ENCODE measurements at regions of chr12 and their contacts with region 1.

Region 1: DNA sequence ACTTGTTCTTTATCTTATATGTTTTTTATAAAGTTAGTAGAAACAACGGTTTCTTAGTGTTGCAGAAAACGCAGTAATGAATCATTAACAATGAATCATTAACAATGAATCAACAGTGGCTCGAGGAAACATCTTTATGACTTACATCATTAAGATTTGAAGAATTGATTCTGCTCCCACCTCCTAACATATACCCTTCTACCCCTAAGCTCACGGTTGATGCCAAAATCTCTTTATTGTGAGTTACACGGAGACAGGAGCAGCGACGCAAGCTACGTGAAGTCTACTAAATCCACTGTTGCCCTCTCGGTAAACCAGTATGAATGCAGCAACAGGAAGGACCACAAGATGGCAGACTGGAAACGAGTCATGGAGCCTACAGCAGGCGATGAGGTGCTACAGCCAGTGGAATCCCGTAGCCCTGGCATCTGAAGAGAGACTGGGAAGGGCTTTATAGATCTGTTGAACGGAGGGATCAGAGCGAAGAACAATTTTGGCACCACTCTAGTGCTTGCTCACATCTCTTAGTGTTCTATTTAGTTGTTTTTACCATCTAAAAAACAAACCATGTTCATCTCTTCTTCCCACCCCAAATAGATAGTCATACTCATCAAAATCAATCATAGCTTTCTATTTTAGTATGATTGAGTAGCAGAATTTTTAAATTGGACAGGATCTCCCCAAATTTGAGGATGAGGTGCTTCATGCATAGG is 332.7 kb downstream of the DUSP6 start:
- DNase-seq: peak; percentile 78
- ATAC-seq: peak; percentile 100
- H3K4me3 ChIP-seq: peak overlapping the region in 2 of 3 experiments; percentile 37 to 41; a peak in 4 of 6 replicates
- H3K27ac ChIP-seq: no peak overlapping the region
- H3K4me1 ChIP-seq: no peaks in the 10 kb centered on the region
- H3K27me3 ChIP-seq: peaks cover 0 to 3% of the 10 kb centered on the region in 2 experiments; a peak in 2 of 5 replicates
- CTCF ChIP-seq: peak; percentile 94
- EP300 ChIP-seq: no peak
- POLR2A ChIP-seq: no peak
- RAD21 ChIP-seq: peak; percentile 77

Region 2: DNA sequence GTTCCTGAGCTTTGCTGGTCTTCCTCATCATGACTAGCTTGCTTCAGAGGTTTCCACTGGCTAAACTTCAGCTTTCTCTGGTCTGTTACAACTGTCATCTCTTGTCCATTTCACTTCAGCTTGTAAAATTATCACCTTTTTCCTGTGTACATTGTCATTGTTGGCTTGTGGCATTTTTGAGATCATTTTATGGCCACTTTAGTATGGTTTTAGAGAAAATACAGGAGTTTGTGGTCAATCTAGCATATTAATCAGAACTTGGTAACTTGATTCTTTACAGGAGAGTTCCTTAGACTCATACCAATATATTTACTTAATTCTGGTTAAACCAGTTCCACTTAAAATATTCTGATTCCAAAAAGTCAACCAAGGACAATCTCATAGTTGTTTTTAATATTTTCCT is 203.4 kb before region 1 on chr12:
- CTCF ChIA-PET with region 1: no interaction called
- POLR2A ChIA-PET with region 1: no interaction called
- in situ Hi-C with region 1: no loop called
- intact Hi-C with region 1: no loop called
- DNase-seq: no peak
- ATAC-seq: no peak
- H3K4me3 ChIP-seq: no peak overlapping the region
- H3K27ac ChIP-seq: no peak overlapping the region
- H3K4me1 ChIP-seq: no peaks in the 10 kb centered on the region
- H3K27me3 ChIP-seq: no peaks in the 10 kb centered on the region
- CTCF ChIP-seq: no peak
- EP300 ChIP-seq: no peak
- POLR2A ChIP-seq: no peak
- RAD21 ChIP-seq: no peak

Region 3: GRCh38 chr12:88889326-88890110 is 130.0 kb before region 1 on chr12:
- CTCF ChIA-PET with region 1: no interaction called
- POLR2A ChIA-PET with region 1: no interaction called
- in situ Hi-C with region 1: no loop called
- intact Hi-C with region 1: no loop called
- DNase-seq: no peak
- ATAC-seq: no peak
- H3K4me3 ChIP-seq: no peak overlapping the region
- H3K27ac ChIP-seq: no peak overlapping the region
- H3K4me1 ChIP-seq: no peaks in the 10 kb centered on the region
- H3K27me3 ChIP-seq: no peaks in the 10 kb centered on the region
- CTCF ChIP-seq: no peak
- EP300 ChIP-seq: no peak
- POLR2A ChIP-seq: no peak
- RAD21 ChIP-seq: no peak

Region 4: GRCh38 chr12:88922816-88923215 is 96.7 kb before region 1 on chr12:
- CTCF ChIA-PET with region 1: no interaction called
- POLR2A ChIA-PET with region 1: no interaction called
- in situ Hi-C with region 1: no loop called
- intact Hi-C with region 1: no loop called
- DNase-seq: no peak
- ATAC-seq: no peak
- H3K4me3 ChIP-seq: no peak overlapping the region
- H3K27ac ChIP-seq: no peak overlapping the region
- H3K4me1 ChIP-seq: peaks cover 20% of the 10 kb centered on the region
- H3K27me3 ChIP-seq: no peaks in the 10 kb centered on the region
- CTCF ChIP-seq: no peak
- EP300 ChIP-seq: no peak
- POLR2A ChIP-seq: no peak
- RAD21 ChIP-seq: no peak

Region 5: DNA sequence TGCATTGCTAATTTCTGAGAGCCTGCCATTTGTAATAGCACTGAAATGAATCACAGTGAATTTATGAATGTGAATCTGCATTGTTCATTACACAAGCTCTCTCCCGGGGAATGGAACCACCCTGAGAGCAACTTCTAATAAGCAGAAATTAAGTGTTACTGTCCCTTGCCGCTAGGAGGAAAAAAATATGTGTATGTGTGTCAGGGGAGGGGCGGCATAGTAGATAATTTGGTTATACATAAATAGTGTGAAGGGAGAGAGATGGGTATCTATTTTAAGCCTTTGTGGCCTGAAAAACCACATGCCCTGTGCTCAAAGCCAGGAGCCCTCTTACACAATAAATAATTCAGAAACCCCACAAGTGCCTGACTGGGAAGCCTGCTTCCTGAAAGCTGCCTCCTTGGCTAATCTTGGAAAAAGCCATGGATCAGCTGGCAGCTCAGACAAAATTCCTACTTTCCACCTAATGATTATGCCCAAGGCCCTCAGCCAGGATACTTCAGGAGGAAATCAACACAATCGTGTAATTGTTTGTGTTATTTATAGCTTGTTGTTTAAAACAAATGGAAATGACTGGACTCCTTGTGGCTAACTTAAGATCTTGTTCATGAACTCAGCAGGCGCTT is 73.1 kb before region 1 on chr12:
- CTCF ChIA-PET with region 1: no interaction called
- POLR2A ChIA-PET with region 1: no interaction called
- in situ Hi-C with region 1: no loop called
- intact Hi-C with region 1: no loop called
- DNase-seq: no peak
- ATAC-seq: no peak
- H3K4me3 ChIP-seq: no peak overlapping the region
- H3K27ac ChIP-seq: no peak overlapping the region
- H3K4me1 ChIP-seq: no peaks in the 10 kb centered on the region
- H3K27me3 ChIP-seq: no peaks in the 10 kb centered on the region
- CTCF ChIP-seq: no peak
- EP300 ChIP-seq: no peak
- POLR2A ChIP-seq: no peak
- RAD21 ChIP-seq: no peak

Region 6: DNA sequence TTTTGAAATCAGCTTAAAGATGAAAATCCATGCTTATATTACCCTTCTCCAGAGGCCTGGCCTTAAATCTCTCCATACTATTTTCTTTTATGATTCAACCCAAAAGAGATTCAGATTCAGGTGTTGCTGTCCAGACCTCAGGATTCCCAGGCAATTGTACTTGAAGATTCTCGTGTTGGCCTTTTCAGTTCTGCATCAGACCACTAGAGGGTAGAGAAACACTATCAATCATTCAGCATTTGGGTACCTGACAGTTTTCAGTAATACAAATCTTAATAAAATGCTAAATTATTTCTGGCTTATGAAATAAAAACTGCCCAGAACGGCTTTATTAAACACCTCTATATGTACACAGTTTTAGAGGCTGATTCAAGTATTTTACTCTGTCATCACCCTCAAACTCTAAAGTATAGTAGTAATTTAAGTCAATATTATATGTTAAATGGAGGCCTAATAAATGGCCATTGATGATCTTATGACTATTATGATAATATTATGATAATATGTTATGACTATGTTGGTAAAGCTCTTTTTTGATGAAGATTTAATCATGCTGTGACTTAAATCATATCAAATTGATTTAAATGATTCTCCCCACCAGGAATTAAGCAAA is 31.6 kb after region 1 on chr12:
- CTCF ChIA-PET with region 1: no interaction called
- POLR2A ChIA-PET with region 1: no interaction called
- in situ Hi-C with region 1: no loop called
- intact Hi-C with region 1: loop called (anchors 2 kb)
- DNase-seq: peak; percentile 38
- ATAC-seq: peak; percentile 69
- H3K4me3 ChIP-seq: no peak overlapping the region
- H3K27ac ChIP-seq: no peak overlapping the region
- H3K4me1 ChIP-seq: no peaks in the 10 kb centered on the region
- H3K27me3 ChIP-seq: no peaks in the 10 kb centered on the region
- CTCF ChIP-seq: peak; percentile 79
- EP300 ChIP-seq: no peak
- POLR2A ChIP-seq: no peak
- RAD21 ChIP-seq: peak; percentile 65

Region 7: GRCh38 chr12:89461649-89462612 is 442.4 kb after region 1 on chr12:
- CTCF ChIA-PET with region 1: interaction called, 24 read pairs
- POLR2A ChIA-PET with region 1: no interaction called
- in situ Hi-C with region 1: no loop called
- intact Hi-C with region 1: loop called (anchors 1 kb)
- DNase-seq: peak; percentile 44
- ATAC-seq: peak; percentile 80
- H3K4me3 ChIP-seq: no peak overlapping the region
- H3K27ac ChIP-seq: no peak overlapping the region
- H3K4me1 ChIP-seq: no peaks in the 10 kb centered on the region
- H3K27me3 ChIP-seq: no peaks in the 10 kb centered on the region
- CTCF ChIP-seq: peak; percentile 72
- EP300 ChIP-seq: no peak
- POLR2A ChIP-seq: no peak
- RAD21 ChIP-seq: peak; percentile 73

Region 8: DNA sequence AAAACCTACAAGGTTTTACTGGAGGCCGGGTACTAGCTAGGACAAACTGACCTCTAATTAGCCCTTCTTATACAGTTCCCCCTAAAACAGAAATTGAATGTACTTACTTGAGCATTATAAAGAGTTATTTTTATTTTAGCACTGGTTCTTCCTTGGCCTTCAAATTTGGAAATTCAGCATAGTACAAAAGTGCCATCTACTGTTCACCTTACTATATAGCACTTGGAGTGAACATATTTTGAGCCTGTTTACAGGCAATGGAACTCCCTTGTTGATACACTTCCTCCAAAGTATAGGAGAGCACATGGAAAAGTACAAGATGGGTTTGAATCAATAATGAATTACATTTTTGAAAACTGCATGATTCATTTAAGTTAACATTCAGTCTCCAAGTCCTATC is 510.2 kb after region 1 on chr12:
- CTCF ChIA-PET with region 1: interaction called, 14 read pairs
- POLR2A ChIA-PET with region 1: no interaction called
- in situ Hi-C with region 1: loop called (anchors 5 kb)
- intact Hi-C with region 1: loop called (anchors 1 kb)
- DNase-seq: peak; percentile 42
- ATAC-seq: no peak
- H3K4me3 ChIP-seq: no peak overlapping the region
- H3K27ac ChIP-seq: no peak overlapping the region
- H3K4me1 ChIP-seq: peaks cover 15% of the 10 kb centered on the region
- H3K27me3 ChIP-seq: no peaks in the 10 kb centered on the region
- CTCF ChIP-seq: peak; percentile 74
- EP300 ChIP-seq: no peak
- POLR2A ChIP-seq: no peak
- RAD21 ChIP-seq: peak; percentile 68

Measured in HepG2 (cell line).